ENCODE measurements at regions of chr22 and their contacts with region 1.

Region 1: GRCh38 chr22:36384766-36385481 is 2.8 kb downstream of the MYH9 start:
- DNase-seq: no peak
- H3K4me3 ChIP-seq: peak overlapping the region; percentile 81 to 100 (median 91)
- H3K27ac ChIP-seq: peak overlapping the region; percentile 96 to 99
- H3K4me1 ChIP-seq: peaks cover 0 to 25% of the 10 kb centered on the region in 2 donors
- H3K27me3 ChIP-seq: no peaks in the 10 kb centered on the region
- CTCF ChIP-seq: no peak
- POLR2A ChIP-seq: no peak

Region 2: DNA sequence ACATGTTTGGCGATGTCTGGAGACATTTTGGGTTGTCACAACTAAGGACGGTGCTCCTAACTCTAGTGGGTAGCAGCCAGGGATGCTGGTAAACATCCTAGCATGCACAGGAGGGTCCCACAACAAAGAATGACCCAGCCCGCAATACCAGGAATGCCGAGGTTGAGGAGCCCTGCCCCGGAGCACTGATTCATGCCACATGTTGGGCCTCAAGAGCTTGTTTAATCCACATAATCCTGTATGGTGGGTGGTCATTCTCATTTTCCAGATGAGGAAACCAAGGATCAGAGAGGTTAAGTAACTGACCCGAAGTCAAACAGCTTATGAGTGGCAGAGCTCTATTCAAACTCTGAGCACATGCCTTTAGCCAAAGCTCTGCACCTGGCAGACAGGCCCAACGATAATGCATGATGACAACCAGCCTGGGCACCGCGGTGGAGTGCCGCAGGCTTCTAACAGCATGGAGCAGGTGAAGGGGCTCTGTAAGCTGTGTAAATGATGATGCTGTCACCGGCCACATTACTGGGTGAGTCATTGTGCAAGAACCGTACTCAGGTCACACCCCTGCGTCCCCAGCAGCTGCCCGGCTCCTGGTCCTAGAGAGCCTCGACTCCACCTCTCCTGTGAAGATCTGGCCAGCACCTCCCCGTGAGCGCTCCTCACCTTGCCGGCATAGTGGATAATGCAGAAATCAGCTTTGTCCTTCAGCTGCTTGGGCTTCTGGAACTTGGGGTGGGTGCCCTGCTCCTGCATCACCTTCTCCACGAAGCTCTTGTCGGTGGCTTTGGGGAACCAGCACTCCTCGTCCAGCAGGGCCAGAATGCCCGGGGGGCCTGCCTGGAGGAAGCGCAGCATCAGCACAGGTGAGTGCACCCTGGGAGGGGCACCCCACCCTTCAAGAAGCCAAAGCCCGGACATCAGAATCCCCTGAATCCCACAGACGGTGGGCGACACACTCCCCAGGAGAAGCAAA is 73.3 kb before region 1 on chr22:
- intact Hi-C with region 1: no loop called
- DNase-seq: no peak
- H3K4me3 ChIP-seq: no peak overlapping the region
- H3K27ac ChIP-seq: no peak overlapping the region
- H3K4me1 ChIP-seq: no peaks in the 10 kb centered on the region
- H3K27me3 ChIP-seq: no peaks in the 10 kb centered on the region
- CTCF ChIP-seq: no peak
- POLR2A ChIP-seq: no peak

Region 3: GRCh38 chr22:36461669-36462649 is 77.0 kb after region 1 on chr22:
- intact Hi-C with region 1: loop called (anchors 5 kb)
- DNase-seq: peak; percentile 86 to 96
- H3K4me3 ChIP-seq: no peak overlapping the region
- H3K27ac ChIP-seq: peak overlapping the region; percentile 92 to 98
- H3K4me1 ChIP-seq: peaks cover 7 to 35% of the 10 kb centered on the region in 2 donors
- H3K27me3 ChIP-seq: no peaks in the 10 kb centered on the region
- CTCF ChIP-seq: no peak
- POLR2A ChIP-seq: no peak